H1 (cell line): ENCODE measurements at regions of chr19 and their contacts with region 1.

Region 1: DNA sequence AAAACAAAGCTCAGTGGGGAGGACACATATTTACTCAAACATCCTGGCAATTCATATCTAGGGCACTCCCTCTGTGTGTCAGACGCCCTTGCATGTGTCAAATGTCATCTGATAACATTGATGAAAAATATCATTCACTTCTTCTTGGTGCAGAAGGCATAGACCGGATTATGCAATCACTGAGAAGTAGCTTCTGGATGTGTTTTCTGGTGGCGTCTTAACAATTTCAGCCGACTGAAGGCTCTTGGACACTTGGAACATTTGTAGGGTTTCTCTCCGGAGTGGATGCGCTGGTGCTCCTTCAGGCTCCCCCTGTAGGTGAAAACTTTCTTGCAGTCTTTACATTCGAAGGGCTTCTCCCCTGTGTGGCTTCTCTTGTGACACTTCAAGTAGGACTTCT is 19.3 kb downstream of the ZSCAN5C start:
- DNase-seq: no peak
- H3K4me3 ChIP-seq: no peak overlapping the region
- H3K27ac ChIP-seq: no peak overlapping the region
- H3K4me1 ChIP-seq: peaks cover 0 to 8% (median 4%) of the 10 kb centered on the region in 4 experiments; a peak in 6 of 7 replicates
- H3K27me3 ChIP-seq: no peaks in the 10 kb centered on the region; a peak in 1 of 7 replicates
- CTCF ChIP-seq: peak; percentile 22 to 50 (median 42)
- EP300 ChIP-seq: no peak
- POLR2A ChIP-seq: no peak
- RAD21 ChIP-seq: peak in 1 of 2 experiments; percentile 40; a peak in 3 of 4 replicates

Region 2: GRCh38 chr19:56090931-56091490 is 130.4 kb before region 1 on chr19:
- CTCF ChIA-PET with region 1: interaction called, 11 read pairs
- POLR2A ChIA-PET with region 1: interaction called, 3 read pairs
- DNase-seq: no peak
- H3K4me3 ChIP-seq: no peak overlapping the region
- H3K27ac ChIP-seq: no peak overlapping the region
- H3K4me1 ChIP-seq: peaks cover 0 to 5% (median 0%) of the 10 kb centered on the region in 4 experiments; a peak in 1 of 7 replicates
- H3K27me3 ChIP-seq: no peaks in the 10 kb centered on the region
- CTCF ChIP-seq: no peak
- EP300 ChIP-seq: no peak
- POLR2A ChIP-seq: no peak
- RAD21 ChIP-seq: no peak

Region 3: DNA sequence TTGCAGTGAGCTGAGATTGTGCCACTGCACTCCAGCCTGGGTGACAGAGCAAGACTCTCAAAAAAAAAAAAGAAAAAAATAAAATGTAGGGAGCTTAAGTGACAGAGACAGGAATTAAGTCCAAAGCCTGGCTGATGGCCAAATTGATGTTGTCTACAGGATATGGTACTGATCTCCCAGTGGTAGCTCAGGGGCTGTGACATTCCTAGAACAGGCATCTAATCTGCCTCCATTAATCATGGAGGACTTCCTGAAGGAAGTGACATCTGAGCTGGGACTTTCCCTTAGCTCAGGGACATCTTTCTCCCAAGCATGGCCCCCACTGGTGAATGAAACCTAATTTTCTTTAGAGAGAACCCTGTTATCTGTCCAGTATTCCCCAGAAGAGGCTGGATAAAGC is 39.7 kb after region 1 on chr19:
- CTCF ChIA-PET with region 1: interaction called, 10 read pairs
- POLR2A ChIA-PET with region 1: no interaction called
- DNase-seq: no peak
- H3K4me3 ChIP-seq: no peak overlapping the region
- H3K27ac ChIP-seq: no peak overlapping the region
- H3K4me1 ChIP-seq: no peaks in the 10 kb centered on the region
- H3K27me3 ChIP-seq: no peaks in the 10 kb centered on the region
- CTCF ChIP-seq: no peak
- EP300 ChIP-seq: no peak
- POLR2A ChIP-seq: no peak
- RAD21 ChIP-seq: no peak